PC-9 (cell line): ENCODE measurements at regions of chr1 and their contacts with region 1.

Region 1: DNA sequence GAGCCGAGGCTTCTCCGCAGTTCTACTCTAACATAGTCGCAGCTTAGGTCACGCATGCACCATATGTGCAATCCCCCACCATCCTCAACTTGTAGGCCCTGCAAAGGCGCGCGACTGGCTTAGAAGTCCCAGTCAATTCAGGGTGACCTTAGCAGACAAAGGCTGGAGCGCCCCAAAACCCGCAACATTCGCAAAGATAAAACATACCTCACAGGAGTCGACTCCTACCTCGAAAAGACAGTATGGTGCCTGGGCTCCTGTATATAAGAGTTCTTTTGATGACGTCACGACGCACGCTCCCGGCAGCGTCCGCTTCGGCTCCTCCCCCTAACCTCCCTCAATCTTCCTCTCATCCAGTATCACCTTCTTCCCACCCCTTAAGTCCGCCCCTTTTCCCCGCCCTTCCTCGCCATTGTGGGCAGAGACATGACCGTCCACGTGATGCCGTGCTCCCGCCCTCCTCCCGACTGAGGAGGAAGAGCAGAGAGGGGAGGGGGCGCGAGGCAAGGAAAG is at the start of gene GAS5:
- DNase-seq: peak; percentile 97 to 99
- H3K4me3 ChIP-seq: peak within 1 kb of the TSS; percentile 95
- H3K27ac ChIP-seq: peak within 1 kb of the TSS; percentile 91
- H3K4me1 ChIP-seq: peaks cover 37% of the 10 kb centered on the region
- H3K27me3 ChIP-seq: no peaks in the 10 kb centered on the region
- CTCF ChIP-seq: no peak
- total RNA-seq, gene GAS5: 234 and 352 TPM in 2 replicates

Region 2: GRCh38 chr1:172532700-172533509 is 1334.9 kb before region 1 on chr1 and contains the start of gene SUCO:
- CTCF ChIA-PET with region 1: no interaction called
- POLR2A ChIA-PET with region 1: no interaction called
- intact Hi-C with region 1: loop called (anchors 10 kb)
- DNase-seq: peak; percentile 98 to 100
- H3K4me3 ChIP-seq: peak within 1 kb of the TSS; percentile 82
- H3K27ac ChIP-seq: peak within 1 kb of the TSS; percentile 74
- H3K4me1 ChIP-seq: peaks cover 43% of the 10 kb centered on the region
- H3K27me3 ChIP-seq: no peaks in the 10 kb centered on the region
- CTCF ChIP-seq: no peak
- total RNA-seq, gene SUCO: 31.2 and 34.0 TPM in 2 replicates

Region 3: DNA sequence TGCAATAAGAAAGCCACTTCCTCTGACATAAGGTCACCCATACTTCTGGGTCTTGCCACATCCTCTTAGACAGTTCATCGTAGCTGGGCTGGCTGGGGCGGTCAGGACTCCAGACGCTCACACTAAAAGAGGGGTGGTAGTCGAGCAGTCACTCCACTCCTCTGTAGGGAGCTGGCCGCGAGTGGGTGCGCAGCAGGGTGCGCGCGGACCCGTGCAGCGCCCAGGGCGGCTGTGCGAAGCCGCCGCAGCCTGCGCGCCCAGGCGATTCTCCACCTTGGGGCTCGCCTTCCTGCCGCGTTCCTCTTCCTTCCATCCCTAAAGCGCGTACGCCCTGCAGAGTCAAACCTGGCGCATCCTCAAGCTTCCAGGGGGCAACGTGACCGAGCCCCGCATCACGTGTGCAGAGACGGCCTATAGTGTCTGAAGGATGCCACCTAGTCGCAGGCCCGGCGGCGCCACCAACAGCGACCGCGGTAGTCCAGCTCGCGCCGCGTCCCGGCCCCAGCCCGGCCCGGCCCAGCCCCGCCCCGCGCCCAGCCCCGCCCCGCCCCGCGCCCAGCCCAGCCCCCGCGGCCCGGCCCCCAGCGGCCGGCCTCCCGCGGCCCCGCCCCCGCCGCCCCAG is 391.0 kb before region 1 on chr1:
- CTCF ChIA-PET with region 1: no interaction called
- POLR2A ChIA-PET with region 1: interaction called, 3 read pairs
- intact Hi-C with region 1: loop called (anchors 2 kb)
- DNase-seq: peak; percentile 87 to 90
- H3K4me3 ChIP-seq: peak overlapping the region; percentile 99
- H3K27ac ChIP-seq: peak overlapping the region; percentile 74
- H3K4me1 ChIP-seq: peaks cover 50% of the 10 kb centered on the region
- H3K27me3 ChIP-seq: no peaks in the 10 kb centered on the region
- CTCF ChIP-seq: 0 out of 2 replicates have a peak, but pooled peaks have one; percentile 21

Region 4: DNA sequence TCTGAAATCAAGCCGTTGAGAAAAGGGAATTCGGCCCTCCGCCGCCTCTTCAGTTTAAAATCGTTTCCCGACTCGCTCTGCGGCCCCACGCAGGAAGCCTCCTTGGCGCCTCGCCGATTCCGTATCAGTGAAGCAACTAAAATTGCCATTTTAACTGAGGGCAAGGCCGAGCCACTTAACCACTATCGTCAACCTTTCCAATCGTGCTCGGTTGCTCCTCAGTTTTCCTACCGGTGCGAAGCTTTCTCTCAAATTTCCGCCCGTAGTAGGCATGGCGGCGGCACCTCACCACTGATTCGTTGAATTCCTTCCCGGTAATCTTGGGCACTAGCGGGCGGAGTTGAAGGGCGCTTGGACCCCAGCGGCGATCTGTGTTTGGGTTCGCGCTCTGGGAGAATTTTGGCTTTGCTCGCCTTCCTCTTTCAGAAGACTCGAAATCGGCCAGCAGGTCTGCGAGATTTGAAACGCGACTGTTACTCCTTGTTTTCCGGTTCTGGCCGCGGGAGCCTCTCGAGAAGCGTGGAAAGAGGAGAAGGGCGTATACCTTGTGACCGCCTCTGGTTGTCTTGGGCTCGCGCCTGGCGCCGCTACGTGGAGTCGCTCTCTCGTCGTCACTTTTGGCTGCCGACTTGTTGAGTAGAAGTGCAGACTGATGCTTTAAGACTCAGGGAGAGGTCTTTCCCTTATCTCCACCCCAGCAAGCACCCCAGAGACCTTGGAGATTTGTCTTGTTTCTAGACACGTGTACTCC is 43.3 kb before region 1 on chr1 and contains the starts of genes CENPL and DARS2:
- CTCF ChIA-PET with region 1: no interaction called
- POLR2A ChIA-PET with region 1: interaction called, 6 read pairs
- intact Hi-C with region 1: loop called (anchors 1 kb)
- DNase-seq: peak; percentile 86 to 90
- H3K4me3 ChIP-seq: peak within 1 kb of the TSS; percentile 84
- H3K27ac ChIP-seq: peak within 1 kb of the TSS; percentile 95
- H3K4me1 ChIP-seq: peaks cover 17% of the 10 kb centered on the region
- H3K27me3 ChIP-seq: no peaks in the 10 kb centered on the region
- CTCF ChIP-seq: no peak
- total RNA-seq, gene CENPL: 14.4 and 19.5 TPM in 2 replicates
- total RNA-seq, gene DARS2: 15.0 and 18.3 TPM in 2 replicates

Region 5: DNA sequence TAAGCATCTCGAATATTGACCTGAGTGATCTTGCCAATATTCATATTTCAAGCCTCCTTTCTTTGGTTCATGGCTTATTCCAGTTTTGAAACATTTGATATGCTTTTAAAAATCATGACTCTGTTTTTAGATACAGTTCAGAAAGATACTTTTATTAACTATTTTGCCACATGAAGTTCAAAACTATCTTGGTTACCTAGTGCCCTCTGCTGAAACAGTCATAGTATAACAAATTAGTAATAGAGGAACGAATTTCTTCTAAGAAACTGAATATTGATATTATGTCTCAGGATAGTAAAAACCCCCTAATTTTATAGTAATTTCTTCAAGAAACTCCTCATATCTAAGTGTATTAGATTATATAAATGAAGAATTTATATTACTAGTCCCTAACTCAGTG is 206.9 kb after region 1 on chr1:
- CTCF ChIA-PET with region 1: no interaction called
- POLR2A ChIA-PET with region 1: no interaction called
- intact Hi-C with region 1: loop called (anchors 10 kb)
- DNase-seq: peak in 1 of 2 experiments; percentile 38
- H3K4me3 ChIP-seq: no peak overlapping the region
- H3K27ac ChIP-seq: no peak overlapping the region
- H3K4me1 ChIP-seq: no peaks in the 10 kb centered on the region
- H3K27me3 ChIP-seq: no peaks in the 10 kb centered on the region
- CTCF ChIP-seq: peak; percentile 73

Region 6: GRCh38 chr1:174999216-174999925 is 1131.6 kb after region 1 on chr1:
- CTCF ChIA-PET with region 1: no interaction called
- POLR2A ChIA-PET with region 1: no interaction called
- intact Hi-C with region 1: loop called (anchors 1 kb)
- DNase-seq: peak; percentile 94 to 95
- H3K4me3 ChIP-seq: peak overlapping the region; percentile 94
- H3K27ac ChIP-seq: peak overlapping the region; percentile 97
- H3K4me1 ChIP-seq: peaks cover 41% of the 10 kb centered on the region
- H3K27me3 ChIP-seq: no peaks in the 10 kb centered on the region
- CTCF ChIP-seq: no peak